IMR-90 (cell line): ENCODE measurements at regions of chr4 and their contacts with region 1.

Region 1: DNA sequence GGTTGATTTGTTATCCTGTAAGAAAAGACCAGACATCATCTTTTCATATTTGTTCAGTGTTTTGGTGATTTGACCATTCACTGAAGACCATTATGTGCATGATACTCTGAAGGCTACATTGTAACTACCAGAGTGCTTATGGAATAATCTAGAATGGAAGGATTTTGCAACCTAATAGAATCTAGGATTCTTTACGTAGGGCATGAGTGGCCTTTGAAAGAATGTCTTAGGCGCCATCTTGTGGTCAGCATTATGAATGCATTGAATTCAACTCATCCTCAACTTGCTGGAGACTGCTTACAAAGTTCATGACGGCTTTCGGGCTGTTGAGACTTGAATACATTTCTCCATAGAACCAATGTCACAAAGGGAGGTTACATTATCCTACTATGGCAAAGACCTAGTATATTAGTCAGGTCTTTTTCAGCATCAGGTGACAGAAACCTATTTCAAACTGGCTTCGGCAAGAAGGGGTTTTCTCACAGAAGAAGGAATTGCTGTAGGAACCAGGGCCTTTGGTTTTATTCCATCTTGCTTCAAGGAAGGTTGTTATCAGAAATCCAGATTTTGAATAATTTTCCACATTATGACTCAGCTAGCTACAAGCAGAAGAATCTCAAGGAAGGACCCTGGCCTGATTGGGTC is 104.1 kb downstream of the GPAT3 start:
- DNase-seq: peak; percentile 80
- ATAC-seq: peak; percentile 97
- H3K4me3 ChIP-seq: no peak overlapping the region
- H3K27ac ChIP-seq: no peak overlapping the region
- H3K4me1 ChIP-seq: no peaks in the 10 kb centered on the region
- H3K27me3 ChIP-seq: peaks cover 10% of the 10 kb centered on the region
- CTCF ChIP-seq: peak; percentile 90
- POLR2A ChIP-seq: peak; percentile 44; the same call in 1 of the 2 replicates
- RAD21 ChIP-seq: peak; percentile 90

Region 2: DNA sequence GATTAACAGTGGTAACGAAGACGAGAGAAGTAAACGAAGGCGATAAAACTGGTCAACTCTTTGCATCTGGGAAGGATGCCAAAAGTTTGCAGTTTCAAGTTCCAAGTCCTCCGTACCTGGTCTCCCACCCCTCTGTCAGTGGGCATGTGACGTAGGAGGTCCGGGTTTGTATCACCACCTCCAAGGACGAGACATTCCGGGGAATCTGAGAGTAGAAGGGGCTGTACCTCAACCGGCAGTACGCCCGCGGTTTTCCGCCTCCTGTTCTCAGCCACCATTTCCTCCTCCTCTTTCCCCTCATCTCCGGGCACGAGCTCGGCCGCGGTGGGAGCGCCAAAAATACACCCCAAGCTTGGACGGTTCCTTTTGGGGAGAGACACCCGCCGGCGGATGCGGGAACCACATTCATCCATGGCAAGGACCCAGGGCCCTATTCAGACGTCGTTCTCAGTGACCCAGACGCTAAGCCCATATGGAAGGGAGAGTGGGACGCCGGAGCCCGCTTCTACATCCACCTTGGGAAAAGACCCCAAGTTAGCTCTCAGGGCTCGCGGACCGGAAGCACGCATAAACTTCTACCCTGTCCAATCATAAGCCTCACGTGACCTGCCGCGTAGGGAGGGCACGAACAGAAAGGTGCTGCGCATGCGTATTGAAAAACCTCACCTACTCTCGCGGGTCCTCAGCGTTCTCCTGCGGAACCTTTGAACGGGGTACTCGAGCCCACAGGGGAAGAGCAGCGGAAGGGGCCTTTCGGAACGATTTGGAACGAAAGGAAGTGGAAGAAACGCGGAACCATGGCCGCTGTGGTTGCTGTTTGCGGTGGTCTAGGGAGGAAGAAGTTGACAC is 184.5 kb before region 1 on chr4 and contains the starts of genes HELQ and MRPS18C:
- CTCF ChIA-PET with region 1: no interaction called
- POLR2A ChIA-PET with region 1: no interaction called
- dilution Hi-C with region 1: no loop called
- in situ Hi-C with region 1: no loop called
- intact Hi-C with region 1: loop called (anchors 1 kb)
- DNase-seq: peak; percentile 99
- ATAC-seq: peak; percentile 96
- H3K4me3 ChIP-seq: peak within 1 kb of the TSS; percentile 67
- H3K27ac ChIP-seq: peak within 1 kb of the TSS; percentile 78
- H3K4me1 ChIP-seq: no peaks in the 10 kb centered on the region
- H3K27me3 ChIP-seq: no peaks in the 10 kb centered on the region
- CTCF ChIP-seq: peak; percentile 22; the same call in 1 of the 2 replicates
- POLR2A ChIP-seq: peak; percentile 97
- RAD21 ChIP-seq: no peak
- total RNA-seq, gene HELQ: 9.1 and 13.1 TPM in 2 replicates
- total RNA-seq, gene MRPS18C: 8.6 and 23.9 TPM in 2 replicates

Region 3: GRCh38 chr4:83503974-83504373 is 136.0 kb before region 1 on chr4:
- CTCF ChIA-PET with region 1: interaction called, 5 read pairs
- POLR2A ChIA-PET with region 1: no interaction called
- dilution Hi-C with region 1: no loop called
- in situ Hi-C with region 1: no loop called
- intact Hi-C with region 1: loop called (anchors 1 kb)
- DNase-seq: no peak
- ATAC-seq: no peak
- H3K4me3 ChIP-seq: no peak overlapping the region
- H3K27ac ChIP-seq: no peak overlapping the region
- H3K4me1 ChIP-seq: no peaks in the 10 kb centered on the region
- H3K27me3 ChIP-seq: peaks cover 4% of the 10 kb centered on the region
- CTCF ChIP-seq: no peak
- POLR2A ChIP-seq: no peak
- RAD21 ChIP-seq: no peak

Region 4: GRCh38 chr4:83535520-83536361 is 104.2 kb before region 1 on chr4 and contains the start of gene GPAT3:
- CTCF ChIA-PET with region 1: no interaction called
- POLR2A ChIA-PET with region 1: no interaction called
- dilution Hi-C with region 1: no loop called
- in situ Hi-C with region 1: no loop called
- intact Hi-C with region 1: loop called (anchors 10 kb)
- DNase-seq: peak; percentile 76
- ATAC-seq: peak; percentile 87
- H3K4me3 ChIP-seq: peak within 1 kb of the TSS; percentile 63
- H3K27ac ChIP-seq: peak within 1 kb of the TSS; percentile 14; the same call in 1 of the 2 replicates
- H3K4me1 ChIP-seq: peaks cover 4% of the 10 kb centered on the region
- H3K27me3 ChIP-seq: peaks cover 15% of the 10 kb centered on the region
- CTCF ChIP-seq: no peak
- POLR2A ChIP-seq: no peak
- RAD21 ChIP-seq: no peak
- total RNA-seq, gene GPAT3: 2.9 and 5.3 TPM in 2 replicates

Region 5: DNA sequence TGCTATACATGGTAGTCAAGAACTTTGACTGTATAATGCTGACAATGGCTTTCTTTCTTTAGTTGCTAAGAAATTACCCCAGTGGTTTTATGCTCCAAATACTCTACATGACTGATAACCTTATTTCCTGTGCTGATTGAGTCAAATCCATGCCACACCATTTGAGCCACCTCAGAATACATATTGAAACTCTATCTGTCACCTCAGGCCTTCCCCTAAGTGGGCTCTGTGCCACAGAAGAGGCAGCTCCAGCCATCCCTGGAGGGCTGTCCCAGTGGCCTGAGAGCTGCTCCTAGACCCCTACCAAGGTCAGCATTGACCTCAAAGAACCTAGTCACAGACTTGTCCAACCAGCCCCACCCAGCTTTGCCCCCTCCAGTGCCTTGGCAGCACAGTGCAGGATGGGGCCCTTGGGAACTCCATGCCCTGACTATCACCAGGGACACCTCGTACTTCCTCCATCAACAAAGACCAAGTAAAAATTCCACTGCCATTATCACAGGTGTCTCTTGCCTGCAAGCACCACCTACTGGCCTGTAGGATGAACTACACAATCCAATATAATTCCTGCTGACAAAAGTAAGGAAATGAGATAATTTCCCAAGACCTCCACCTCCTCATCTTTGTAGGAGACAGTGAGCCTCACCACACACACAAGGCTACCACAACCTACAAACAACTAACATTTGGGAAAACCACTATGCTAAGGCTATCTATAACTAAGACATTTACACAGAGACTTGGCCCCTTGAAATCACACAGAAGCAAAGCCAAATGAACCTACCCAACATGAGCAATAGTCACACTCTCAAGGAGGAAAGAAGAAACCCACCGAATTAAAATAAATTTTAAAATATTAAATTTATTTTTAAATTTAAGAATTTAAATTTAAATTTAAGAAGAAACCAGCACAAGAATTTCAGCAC is 619.2 kb after region 1 on chr4:
- CTCF ChIA-PET with region 1: no interaction called
- POLR2A ChIA-PET with region 1: no interaction called
- dilution Hi-C with region 1: no loop called
- in situ Hi-C with region 1: no loop called
- intact Hi-C with region 1: loop called (anchors 1 kb)
- DNase-seq: peak; percentile 32
- ATAC-seq: peak; percentile 62; the same call in 1 of the 2 replicates
- H3K4me3 ChIP-seq: no peak overlapping the region
- H3K27ac ChIP-seq: no peak overlapping the region
- H3K4me1 ChIP-seq: no peaks in the 10 kb centered on the region
- H3K27me3 ChIP-seq: no peaks in the 10 kb centered on the region
- CTCF ChIP-seq: peak; percentile 74
- POLR2A ChIP-seq: no peak
- RAD21 ChIP-seq: peak; percentile 68

Region 6: GRCh38 chr4:84750253-84750959 is 1110.4 kb after region 1 on chr4:
- CTCF ChIA-PET with region 1: no interaction called
- POLR2A ChIA-PET with region 1: no interaction called
- dilution Hi-C with region 1: no loop called
- in situ Hi-C with region 1: no loop called
- intact Hi-C with region 1: loop called (anchors 5 kb)
- DNase-seq: peak; percentile 65
- ATAC-seq: peak; percentile 59
- H3K4me3 ChIP-seq: no peak overlapping the region
- H3K27ac ChIP-seq: no peak overlapping the region
- H3K4me1 ChIP-seq: no peaks in the 10 kb centered on the region
- H3K27me3 ChIP-seq: no peaks in the 10 kb centered on the region
- CTCF ChIP-seq: peak; percentile 64
- POLR2A ChIP-seq: no peak
- RAD21 ChIP-seq: peak; percentile 60